Left cardiac atrium (tissue), 4 donors: ENCODE measurements at regions of chr18 and their contacts with region 1.

Region 1: GRCh38 chr18:54983041-54983686 is 23.9 kb upstream of the CCDC68 start:
- DNase-seq: no peak
- ATAC-seq: peak; percentile 48 to 61

Region 2: GRCh38 chr18:54444319-54444914 is 538.7 kb before region 1 on chr18:
- intact Hi-C with region 1: loop called in 1 of 2 experiments (anchors 2 kb)
- DNase-seq: peak; percentile 30
- ATAC-seq: peak; percentile 58 to 78

Region 3: DNA sequence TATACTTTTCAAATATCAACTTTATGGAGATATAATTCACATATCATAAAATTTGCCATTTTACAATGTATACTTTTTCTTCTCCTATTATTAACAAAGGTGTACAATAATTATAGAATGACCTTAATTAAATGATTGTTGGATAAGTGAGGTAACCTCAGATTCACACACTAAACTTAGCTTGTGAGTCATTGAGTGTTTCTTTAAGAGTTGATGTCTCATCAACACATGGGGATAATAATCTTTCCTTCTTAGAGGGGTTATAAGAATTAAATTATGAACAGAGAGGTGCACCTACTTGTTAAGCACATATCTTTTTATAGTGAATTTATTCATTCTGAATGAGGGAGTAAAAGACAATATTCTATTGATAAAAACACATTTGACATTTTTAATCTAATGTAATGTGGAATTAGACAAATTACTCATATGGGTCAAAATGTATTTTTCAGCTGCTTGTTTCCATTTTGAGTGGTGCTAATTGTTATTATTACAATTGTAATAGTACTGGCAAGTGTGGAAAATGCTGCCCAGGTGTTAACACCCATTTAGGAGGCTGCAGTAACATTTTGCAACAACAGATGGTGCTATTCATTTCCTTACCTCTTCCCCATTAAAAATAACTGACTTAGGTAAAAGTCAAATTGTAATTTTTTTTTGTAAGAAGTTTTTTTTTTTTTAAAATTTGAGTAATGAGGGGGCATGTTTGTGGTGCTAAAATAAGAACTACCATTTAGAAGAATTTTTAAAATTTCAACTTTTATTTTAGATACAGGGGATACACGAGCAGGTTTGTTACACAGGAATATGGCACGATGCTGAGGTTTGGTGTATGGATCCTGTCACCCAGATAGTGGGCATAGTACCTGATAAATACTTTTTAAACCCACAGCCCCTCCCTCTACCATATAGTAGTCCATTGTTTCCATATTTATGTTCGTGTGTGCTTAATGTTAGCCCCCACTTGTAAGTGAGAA is 424.3 kb before region 1 on chr18:
- intact Hi-C with region 1: loop called in 1 of 2 experiments (anchors 5 kb)
- DNase-seq: no peak
- ATAC-seq: no peak

Region 4: DNA sequence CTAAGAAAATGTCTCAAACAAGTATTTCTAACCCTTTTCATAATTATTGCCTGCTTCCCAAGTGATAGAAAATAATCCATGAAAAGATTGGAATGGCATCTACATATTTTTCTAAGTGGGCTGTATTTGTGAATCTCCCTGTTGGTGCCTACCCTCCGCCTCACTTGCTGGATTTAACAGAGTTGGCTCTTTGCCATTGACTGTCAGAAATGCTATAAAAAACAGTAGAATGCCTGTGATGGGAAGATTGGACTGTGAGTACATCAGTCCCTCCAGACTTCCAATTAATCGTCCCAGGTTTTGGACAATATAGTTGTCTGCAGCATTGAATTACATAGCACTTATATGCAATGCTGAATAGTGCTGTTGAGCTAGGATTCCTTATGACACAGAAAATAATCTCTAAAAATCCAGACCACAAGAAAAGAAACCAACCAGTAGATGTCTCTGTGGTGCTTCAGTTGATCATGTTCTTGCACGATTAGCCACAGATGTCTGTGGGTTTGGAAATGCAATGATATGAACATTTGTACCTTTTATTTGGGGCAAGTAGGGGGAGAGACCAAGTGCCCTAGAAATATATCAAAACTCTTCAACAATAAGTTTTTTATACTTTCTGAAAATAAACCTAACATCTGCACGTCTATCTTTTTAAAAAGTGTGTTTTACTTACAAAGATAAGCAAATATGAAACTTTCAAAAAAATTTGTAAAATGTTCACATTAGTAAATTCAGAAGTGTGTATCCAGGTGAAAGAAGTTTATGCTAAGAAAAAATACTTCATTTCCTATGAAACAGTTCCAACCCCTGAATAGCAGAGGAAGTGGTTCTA is 303.6 kb before region 1 on chr18:
- intact Hi-C with region 1: loop called (anchors 5 to 10 kb)
- DNase-seq: no peak
- ATAC-seq: peak in 1 of 2 donors; percentile 73

Region 5: GRCh38 chr18:55087998-55088401 is 104.8 kb after region 1 on chr18:
- intact Hi-C with region 1: no loop called
- DNase-seq: no peak
- ATAC-seq: peak in 1 of 2 donors; percentile 65